Activated naive CD4-positive, alpha-beta T cell treated with anti-CD3 and anti-CD28 coated beads for 36 hours (primary cell): ENCODE measurements at regions of chr12 and their contacts with region 1.

Region 1: DNA sequence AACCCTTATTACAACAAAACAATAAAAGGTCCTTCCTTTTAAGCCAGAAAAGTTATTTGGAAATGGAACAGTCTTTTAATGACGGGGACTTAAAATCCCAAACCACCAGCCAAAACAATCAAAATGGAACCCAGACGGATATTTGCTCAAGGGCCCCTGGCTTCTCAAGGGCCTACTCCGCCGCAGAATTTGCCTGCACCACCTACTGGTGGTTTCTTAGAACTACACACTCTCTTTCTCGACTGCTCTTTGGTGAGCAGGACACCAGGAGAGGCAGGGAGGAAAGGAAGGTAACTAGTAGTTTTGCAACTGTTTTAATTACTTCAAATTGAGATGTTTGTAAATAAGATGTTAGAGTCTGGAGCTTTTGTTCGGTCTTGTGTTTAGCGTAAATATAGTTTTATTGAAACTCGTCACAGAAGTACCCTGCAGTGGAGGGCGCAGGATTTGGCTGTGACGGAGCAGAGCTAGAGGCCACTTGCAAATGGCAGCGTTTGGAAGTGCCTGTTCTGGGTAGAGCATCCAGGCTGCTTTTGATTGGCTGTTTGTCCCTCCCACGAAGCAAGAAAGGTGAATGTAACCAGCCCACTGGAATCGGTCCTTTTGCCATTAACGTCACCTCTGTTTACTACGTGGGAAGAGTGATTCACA is 238.5 kb downstream of the CACNA1C start:
- DNase-seq: peak; percentile 57
- H3K4me3 Mint-ChIP-seq: no peak overlapping the region
- H3K27ac Mint-ChIP-seq: no peak overlapping the region
- H3K4me1 Mint-ChIP-seq: peaks cover 6% of the 10 kb centered on the region
- H3K27me3 Mint-ChIP-seq: peaks cover 3% of the 10 kb centered on the region

Region 2: DNA sequence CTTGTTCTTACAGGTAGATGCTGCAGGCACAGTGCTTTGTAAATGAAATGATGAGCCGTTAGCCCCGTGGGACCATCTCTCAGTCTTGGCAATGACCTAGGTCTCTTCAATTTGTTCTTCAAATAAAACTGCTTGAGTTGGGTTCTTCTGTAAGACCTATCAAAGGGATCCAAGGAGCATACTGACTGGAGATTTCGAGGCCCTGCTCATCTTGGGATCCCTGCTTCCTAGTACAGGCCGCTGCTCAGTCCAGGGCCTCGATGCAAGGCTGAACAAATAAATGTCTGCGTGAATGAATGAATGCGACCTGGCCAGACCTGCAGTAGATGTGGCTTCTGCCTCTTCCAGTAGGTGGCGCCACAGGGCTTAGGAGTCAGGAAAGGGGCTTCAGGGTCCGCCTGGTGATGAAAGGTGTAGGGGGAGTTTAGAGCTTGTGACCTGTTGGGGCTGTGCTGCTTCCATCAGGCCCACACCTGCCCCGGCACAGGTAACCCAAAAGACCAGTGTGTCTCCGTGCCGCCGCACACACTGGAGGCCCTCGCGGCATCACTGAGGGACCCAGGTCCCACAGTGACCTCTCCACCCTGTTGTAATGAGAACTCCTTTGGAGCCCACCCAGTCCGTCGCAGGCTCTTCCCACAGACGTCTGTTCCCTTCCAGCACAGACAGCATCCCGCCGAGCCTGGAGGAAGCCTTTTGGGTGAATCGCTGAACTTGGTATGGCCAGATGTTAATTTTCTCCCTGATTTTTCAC is 234.1 kb before region 1 on chr12:
- CTCF ChIA-PET with region 1: no interaction called
- intact Hi-C with region 1: loop called (anchors 2 kb)
- DNase-seq: peak; percentile 68
- H3K4me3 Mint-ChIP-seq: no peak overlapping the region
- H3K27ac Mint-ChIP-seq: no peak overlapping the region
- H3K4me1 Mint-ChIP-seq: peaks cover 10% of the 10 kb centered on the region
- H3K27me3 Mint-ChIP-seq: peaks cover 30% of the 10 kb centered on the region